B cell (primary cell): ENCODE measurements at regions of chr3 and their contacts with region 1.

Region 1: DNA sequence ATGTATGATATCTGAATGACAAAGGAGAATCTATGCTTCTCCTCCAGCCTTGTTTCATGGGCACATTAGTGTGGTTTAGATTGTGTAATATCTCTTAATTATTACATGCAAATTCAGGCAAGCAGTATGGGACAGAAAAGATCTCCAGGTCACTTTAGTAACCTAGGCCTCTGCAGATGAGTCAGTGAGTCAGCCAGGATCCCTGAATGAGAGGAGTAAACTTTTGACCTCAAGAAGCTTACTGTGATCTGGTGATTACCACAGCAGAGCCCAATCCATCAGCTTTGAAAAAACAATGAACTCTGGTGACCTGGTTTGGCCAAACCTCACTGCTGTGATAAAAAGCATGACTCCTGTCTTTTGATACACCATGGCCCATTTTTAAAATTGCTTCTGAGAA is 107.8 kb downstream of the LRRN1 start:
- DNase-seq: no peak
- ATAC-seq: no peak
- H3K4me3 ChIP-seq: no peak overlapping the region
- H3K4me3 Mint-ChIP-seq: no peak overlapping the region
- H3K27ac ChIP-seq: no peak overlapping the region
- H3K27ac Mint-ChIP-seq: no peak overlapping the region
- H3K4me1 ChIP-seq: no peaks in the 10 kb centered on the region
- H3K4me1 Mint-ChIP-seq: no peaks in the 10 kb centered on the region
- H3K27me3 ChIP-seq: no peaks in the 10 kb centered on the region
- H3K27me3 Mint-ChIP-seq: no peaks in the 10 kb centered on the region
- CTCF ChIP-seq: no peak

Region 2: GRCh38 chr3:3817865-3818264 is 89.2 kb before region 1 on chr3:
- CTCF ChIA-PET with region 1: no interaction called
- POLR2A ChIA-PET with region 1: no interaction called
- intact Hi-C with region 1: no loop called
- DNase-seq: no peak
- ATAC-seq: no peak
- H3K4me3 ChIP-seq: no peak overlapping the region
- H3K4me3 Mint-ChIP-seq: no peak overlapping the region
- H3K27ac ChIP-seq: no peak overlapping the region
- H3K27ac Mint-ChIP-seq: no peak overlapping the region
- H3K4me1 ChIP-seq: no peaks in the 10 kb centered on the region
- H3K4me1 Mint-ChIP-seq: no peaks in the 10 kb centered on the region
- H3K27me3 ChIP-seq: no peaks in the 10 kb centered on the region
- H3K27me3 Mint-ChIP-seq: no peaks in the 10 kb centered on the region
- CTCF ChIP-seq: no peak

Region 3: DNA sequence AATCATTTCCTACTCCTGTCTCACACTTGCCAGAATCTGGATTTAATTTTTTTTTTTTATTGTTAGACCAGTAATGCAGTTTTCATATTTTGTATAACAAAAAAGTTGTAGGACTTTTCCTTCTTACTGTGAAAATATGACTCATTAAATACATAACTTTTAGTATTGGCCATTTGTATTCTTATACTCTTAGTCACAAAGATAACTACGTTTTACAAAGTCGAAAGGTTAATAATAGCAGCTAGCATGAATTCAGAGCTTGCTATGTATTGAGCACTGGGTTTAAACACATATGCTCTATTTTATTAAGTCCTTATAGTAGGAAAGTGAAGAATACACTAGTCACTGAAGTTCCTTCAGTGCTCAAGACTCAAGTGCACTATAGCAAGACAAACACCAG is 64.7 kb before region 1 on chr3:
- CTCF ChIA-PET with region 1: no interaction called
- POLR2A ChIA-PET with region 1: no interaction called
- intact Hi-C with region 1: no loop called
- DNase-seq: no peak
- ATAC-seq: no peak
- H3K4me3 ChIP-seq: no peak overlapping the region
- H3K4me3 Mint-ChIP-seq: no peak overlapping the region
- H3K27ac ChIP-seq: no peak overlapping the region
- H3K27ac Mint-ChIP-seq: no peak overlapping the region
- H3K4me1 ChIP-seq: no peaks in the 10 kb centered on the region
- H3K4me1 Mint-ChIP-seq: peaks cover under 1% of the 10 kb centered on the region
- H3K27me3 ChIP-seq: no peaks in the 10 kb centered on the region
- H3K27me3 Mint-ChIP-seq: no peaks in the 10 kb centered on the region
- CTCF ChIP-seq: no peak

Region 4: GRCh38 chr3:3862534-3862933 is 44.5 kb before region 1 on chr3:
- CTCF ChIA-PET with region 1: no interaction called
- POLR2A ChIA-PET with region 1: no interaction called
- intact Hi-C with region 1: loop called (anchors 1 kb)
- DNase-seq: no peak
- ATAC-seq: no peak
- H3K4me3 ChIP-seq: no peak overlapping the region
- H3K4me3 Mint-ChIP-seq: no peak overlapping the region
- H3K27ac ChIP-seq: no peak overlapping the region
- H3K27ac Mint-ChIP-seq: no peak overlapping the region
- H3K4me1 ChIP-seq: no peaks in the 10 kb centered on the region
- H3K4me1 Mint-ChIP-seq: no peaks in the 10 kb centered on the region
- H3K27me3 ChIP-seq: no peaks in the 10 kb centered on the region
- H3K27me3 Mint-ChIP-seq: no peaks in the 10 kb centered on the region
- CTCF ChIP-seq: no peak